Activated B cell treated with CpG ODN at 0.5 μM for 24 hours (primary cell): ENCODE measurements at regions of chr4 and their contacts with region 1.

Region 1: DNA sequence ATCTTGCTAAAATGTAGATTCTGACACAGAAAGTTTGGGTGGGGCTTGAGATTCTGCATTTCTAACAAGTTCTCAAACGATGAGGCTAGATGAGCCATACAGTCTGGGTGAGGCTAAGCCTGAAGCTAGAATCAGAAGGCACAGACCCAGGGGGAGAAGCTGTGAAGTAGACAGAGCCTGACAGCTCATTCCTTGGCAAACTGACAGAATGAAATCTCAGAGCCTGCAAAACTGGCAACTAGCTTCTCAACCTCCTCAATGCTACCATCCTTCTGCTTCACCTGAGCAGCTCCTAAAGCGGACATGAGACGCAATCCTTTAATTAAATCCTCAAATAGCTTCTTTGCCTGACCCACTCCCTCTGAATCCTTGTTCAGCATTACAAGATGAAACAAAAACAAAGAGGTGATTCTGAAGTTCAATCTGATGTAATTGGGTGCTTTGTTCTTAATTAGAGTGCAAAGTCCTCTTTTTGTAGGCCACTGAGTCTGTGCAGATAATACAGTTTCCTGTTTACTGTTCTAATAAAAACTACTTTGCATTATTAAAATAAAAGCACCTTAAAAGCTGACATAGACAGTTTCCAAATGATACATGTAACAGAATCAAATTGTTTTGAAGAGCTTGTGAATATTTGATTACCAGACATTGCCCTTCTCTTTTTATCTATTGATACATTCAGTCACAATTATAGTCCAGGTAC is 71.0 kb upstream of the BMP2K start:
- DNase-seq: no peak
- ATAC-seq: no peak
- H3K4me3 Mint-ChIP-seq: no peak overlapping the region
- H3K27ac Mint-ChIP-seq: peak overlapping the region; percentile 46
- H3K4me1 Mint-ChIP-seq: peaks cover 42% of the 10 kb centered on the region
- H3K27me3 Mint-ChIP-seq: no peaks in the 10 kb centered on the region
- CTCF ChIP-seq: no peak

Region 2: GRCh38 chr4:78667764-78668163 is 37.4 kb before region 1 on chr4:
- CTCF ChIA-PET with region 1: no interaction called
- POLR2A ChIA-PET with region 1: interaction called, 4 read pairs
- intact Hi-C with region 1: loop called (anchors 5 kb)
- DNase-seq: no peak
- ATAC-seq: peak; percentile 79
- H3K4me3 Mint-ChIP-seq: peak overlapping the region; percentile 54
- H3K27ac Mint-ChIP-seq: peak overlapping the region; percentile 83
- H3K4me1 Mint-ChIP-seq: peaks cover 85% of the 10 kb centered on the region
- H3K27me3 Mint-ChIP-seq: no peaks in the 10 kb centered on the region
- CTCF ChIP-seq: no peak

Region 3: DNA sequence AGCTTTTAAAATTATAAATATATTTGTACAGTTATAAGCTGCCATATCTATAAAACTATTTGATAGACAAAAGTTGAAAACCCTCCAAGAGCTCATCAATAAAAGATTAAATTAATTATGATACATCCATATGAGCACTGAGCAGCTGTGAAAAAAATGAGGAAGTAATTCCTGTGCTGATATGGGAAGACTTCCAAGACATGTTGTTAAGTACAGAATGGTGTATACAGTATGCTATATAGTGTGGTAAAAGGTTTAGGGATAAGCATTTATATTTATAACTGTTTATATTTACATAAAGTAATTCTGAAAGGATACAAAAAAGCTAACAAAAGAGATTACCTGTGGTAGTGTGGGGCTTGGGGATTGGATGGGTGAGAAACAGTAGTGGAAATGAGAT is 21.8 kb before region 1 on chr4:
- CTCF ChIA-PET with region 1: interaction called, 3 read pairs
- POLR2A ChIA-PET with region 1: interaction called, 10 read pairs
- intact Hi-C with region 1: no loop called
- DNase-seq: no peak
- ATAC-seq: no peak
- H3K4me3 Mint-ChIP-seq: no peak overlapping the region
- H3K27ac Mint-ChIP-seq: no peak overlapping the region
- H3K4me1 Mint-ChIP-seq: no peaks in the 10 kb centered on the region
- H3K27me3 Mint-ChIP-seq: no peaks in the 10 kb centered on the region
- CTCF ChIP-seq: no peak

Region 4: GRCh38 chr4:78691971-78692821 is 12.9 kb before region 1 on chr4:
- CTCF ChIA-PET with region 1: no interaction called
- POLR2A ChIA-PET with region 1: interaction called, 4 read pairs
- intact Hi-C with region 1: loop called (anchors 2 kb)
- DNase-seq: no peak
- ATAC-seq: peak; percentile 98
- H3K4me3 Mint-ChIP-seq: no peak overlapping the region
- H3K27ac Mint-ChIP-seq: peak overlapping the region; percentile 2
- H3K4me1 Mint-ChIP-seq: peaks cover 23% of the 10 kb centered on the region
- H3K27me3 Mint-ChIP-seq: no peaks in the 10 kb centered on the region
- CTCF ChIP-seq: no peak

Region 5: DNA sequence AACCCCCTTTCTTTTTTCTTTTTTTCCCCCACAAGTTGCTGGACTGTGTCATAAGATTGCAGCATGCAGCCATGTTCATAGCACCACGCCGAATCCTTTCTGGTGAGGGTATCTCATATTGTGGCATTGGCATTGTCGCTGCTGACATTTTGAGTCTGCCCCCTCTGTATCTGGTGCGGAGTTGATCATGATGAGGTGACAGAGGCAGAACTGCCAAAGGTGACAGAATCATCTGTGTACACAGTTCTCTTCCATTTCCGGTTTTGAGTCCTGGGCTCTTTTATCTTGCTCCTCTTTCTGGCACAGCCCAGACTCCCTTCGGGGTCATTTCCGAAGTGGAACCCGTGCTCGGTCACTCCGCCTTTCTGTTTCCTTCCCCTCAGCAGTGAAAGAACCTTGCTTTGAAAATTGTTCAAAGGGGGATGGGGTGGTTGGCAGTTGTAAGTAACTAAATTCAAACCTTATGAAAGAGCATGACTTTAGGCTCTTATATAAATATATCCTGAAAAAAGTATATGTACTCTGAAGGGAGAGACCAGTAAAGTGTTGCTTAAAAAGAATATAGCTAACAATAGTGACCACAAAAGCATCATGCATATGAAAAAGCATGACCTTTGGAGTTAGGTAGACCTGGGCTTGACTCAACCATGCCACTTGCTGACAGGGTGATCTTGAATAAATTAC is 16.0 kb after region 1 on chr4:
- CTCF ChIA-PET with region 1: no interaction called
- POLR2A ChIA-PET with region 1: interaction called, 3 read pairs
- intact Hi-C with region 1: loop called (anchors 2 kb)
- DNase-seq: no peak
- ATAC-seq: peak; percentile 75
- H3K4me3 Mint-ChIP-seq: peak overlapping the region; percentile 78
- H3K27ac Mint-ChIP-seq: peak overlapping the region; percentile 89
- H3K4me1 Mint-ChIP-seq: peaks cover 40% of the 10 kb centered on the region
- H3K27me3 Mint-ChIP-seq: no peaks in the 10 kb centered on the region
- CTCF ChIP-seq: no peak